Panc1 (cell line): ENCODE measurements at regions of chr5 and their contacts with region 1.

Region 1: GRCh38 chr5:68272289-68272688 is 56.7 kb downstream of the PIK3R1 start:
- DNase-seq: no peak
- ATAC-seq: no peak
- H3K4me3 ChIP-seq: no peak overlapping the region
- H3K27ac ChIP-seq: no peak overlapping the region
- H3K4me1 ChIP-seq: peaks cover 2% of the 10 kb centered on the region; the same call in 1 of the 2 replicates
- H3K27me3 ChIP-seq: no peaks in the 10 kb centered on the region
- CTCF ChIP-seq: peak; percentile 22; the same call in 1 of the 2 replicates

Region 2: DNA sequence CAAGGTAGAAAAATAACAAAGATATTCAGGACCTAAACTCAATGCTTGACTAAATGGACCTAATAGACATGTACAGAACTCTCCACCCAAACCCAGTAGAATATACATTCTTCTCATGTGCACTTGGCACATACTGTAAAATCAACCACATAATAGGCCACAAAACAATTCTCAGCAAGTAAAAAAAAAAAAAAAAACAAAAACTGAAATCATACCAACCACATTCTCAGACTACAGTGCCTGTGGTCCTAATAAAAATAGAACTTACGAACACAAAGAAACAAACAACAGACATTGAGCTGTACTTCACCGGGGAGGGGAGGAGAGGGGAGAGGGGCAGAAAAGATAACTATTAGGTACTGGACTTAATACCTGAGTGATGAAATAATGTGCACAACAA is 961.5 kb before region 1 on chr5:
- CTCF ChIA-PET with region 1: no interaction called
- POLR2A ChIA-PET with region 1: interaction called, 10 read pairs
- in situ Hi-C with region 1: no loop called
- intact Hi-C with region 1: no loop called
- DNase-seq: no peak
- ATAC-seq: no peak
- H3K4me3 ChIP-seq: no peak overlapping the region
- H3K27ac ChIP-seq: no peak overlapping the region
- H3K4me1 ChIP-seq: no peaks in the 10 kb centered on the region
- H3K27me3 ChIP-seq: no peaks in the 10 kb centered on the region
- CTCF ChIP-seq: no peak

Region 3: GRCh38 chr5:68292316-68292715 is 20.0 kb after region 1 on chr5:
- CTCF ChIA-PET with region 1: no interaction called
- POLR2A ChIA-PET with region 1: no interaction called
- in situ Hi-C with region 1: no loop called
- intact Hi-C with region 1: no loop called
- DNase-seq: no peak
- ATAC-seq: no peak
- H3K4me3 ChIP-seq: no peak overlapping the region
- H3K27ac ChIP-seq: no peak overlapping the region
- H3K4me1 ChIP-seq: peaks cover 11% of the 10 kb centered on the region
- H3K27me3 ChIP-seq: no peaks in the 10 kb centered on the region
- CTCF ChIP-seq: no peak